Activated CD4-positive, alpha-beta memory T cell treated with anti-CD3 and anti-CD28 coated beads, Interleukin-2, amount 10 ng/mL, durations not matched to agents 7 days and 5 days (primary cell): ENCODE measurements at regions of chr22 and their contacts with region 1.

Region 1: GRCh38 chr22:37498289-37498909 is 12.2 kb upstream of the MFNG start:
- DNase-seq: peak; percentile 75
- H3K4me3 Mint-ChIP-seq: no peak overlapping the region
- H3K27ac Mint-ChIP-seq: no peak overlapping the region
- H3K4me1 Mint-ChIP-seq: peaks cover 12% of the 10 kb centered on the region
- H3K27me3 Mint-ChIP-seq: peaks cover 18% of the 10 kb centered on the region

Region 2: DNA sequence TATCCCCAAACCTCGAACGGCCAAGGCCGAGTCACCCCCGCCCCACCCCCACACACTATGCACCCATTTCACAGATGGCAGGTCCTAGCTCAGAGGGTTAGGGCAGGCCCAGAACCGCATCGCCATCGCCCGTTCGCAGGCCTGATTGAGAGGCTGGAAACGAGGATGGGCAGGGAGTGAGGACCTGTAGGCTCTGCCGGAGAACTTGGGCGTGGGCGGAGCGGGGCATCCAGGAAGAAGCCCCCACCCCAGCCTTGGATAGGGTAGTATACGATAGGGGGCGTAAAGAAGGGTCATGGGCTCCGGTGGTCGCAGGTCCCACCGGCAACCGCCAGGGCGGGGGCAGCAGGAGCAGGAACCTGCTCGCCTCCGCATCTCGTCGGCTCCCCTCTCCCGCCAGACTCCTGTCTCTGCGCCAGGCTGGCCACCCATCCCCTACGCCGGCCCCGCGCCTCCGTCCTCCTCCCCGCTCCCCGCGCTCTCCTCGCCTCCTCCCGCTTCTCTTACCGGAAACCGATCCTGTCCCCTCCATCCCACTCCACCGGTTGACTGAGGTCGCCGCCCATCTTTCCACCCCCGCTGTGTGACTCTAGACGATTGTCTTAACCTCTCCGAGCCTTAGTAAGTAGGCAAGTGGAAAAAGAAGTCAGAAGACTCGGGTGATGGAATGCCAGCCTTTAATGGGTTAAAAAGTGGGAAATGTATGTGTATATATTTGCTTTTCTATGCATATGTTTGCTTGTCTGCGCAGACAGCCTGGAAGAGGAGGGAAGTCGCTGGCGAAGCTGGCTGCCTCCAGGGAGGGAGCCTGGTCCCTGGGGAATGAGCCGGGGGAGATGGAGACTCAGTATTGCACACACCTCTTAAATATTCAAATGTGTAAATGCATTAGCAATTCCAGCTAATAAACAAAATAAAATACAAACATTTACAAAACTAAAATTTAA is 163.3 kb before region 1 on chr22:
- CTCF ChIA-PET with region 1: no interaction called
- POLR2A ChIA-PET with region 1: no interaction called
- DNase-seq: no peak
- H3K4me3 Mint-ChIP-seq: no peak overlapping the region
- H3K27ac Mint-ChIP-seq: no peak overlapping the region
- H3K4me1 Mint-ChIP-seq: peaks cover 9% of the 10 kb centered on the region
- H3K27me3 Mint-ChIP-seq: peaks cover 58% of the 10 kb centered on the region

Region 3: GRCh38 chr22:37486224-37486845 is 12.1 kb before region 1 on chr22 and contains the start of gene MFNG:
- CTCF ChIA-PET with region 1: interaction called, 16 read pairs
- POLR2A ChIA-PET with region 1: interaction called, 18 read pairs
- DNase-seq: peak; percentile 82
- H3K4me3 Mint-ChIP-seq: peak within 1 kb of the TSS; percentile 98
- H3K27ac Mint-ChIP-seq: peak within 1 kb of the TSS; percentile 94
- H3K4me1 Mint-ChIP-seq: peaks cover 56% of the 10 kb centered on the region
- H3K27me3 Mint-ChIP-seq: no peaks in the 10 kb centered on the region
- total RNA-seq, gene MFNG: 200 to 203 TPM

Region 4: GRCh38 chr22:37566903-37567820 is 68.8 kb after region 1 on chr22:
- CTCF ChIA-PET with region 1: no interaction called
- POLR2A ChIA-PET with region 1: no interaction called
- DNase-seq: peak; percentile 97
- H3K4me3 Mint-ChIP-seq: peak overlapping the region; percentile 54
- H3K27ac Mint-ChIP-seq: peak overlapping the region; percentile 79
- H3K4me1 Mint-ChIP-seq: peaks cover 27% of the 10 kb centered on the region
- H3K27me3 Mint-ChIP-seq: peaks cover 43% of the 10 kb centered on the region

Region 5: DNA sequence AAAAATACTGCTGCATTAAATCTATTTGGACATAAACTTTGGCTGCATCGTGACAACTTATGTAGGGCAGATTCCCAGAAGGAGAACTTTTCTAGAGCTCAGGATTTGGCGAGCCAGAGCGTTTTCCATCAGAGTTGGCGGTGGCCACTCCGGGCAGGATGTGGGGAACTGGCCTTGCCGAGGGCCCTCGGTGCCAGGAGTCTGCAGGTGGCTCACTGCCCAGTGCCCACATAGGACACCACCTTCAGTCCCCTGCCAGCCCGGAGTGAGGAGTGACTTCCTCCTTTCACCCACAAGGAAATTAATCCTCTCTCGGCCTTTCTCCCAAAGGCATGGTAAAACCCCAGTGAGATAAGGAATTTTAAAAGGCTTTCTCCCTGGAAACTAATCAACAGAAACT is 83.1 kb after region 1 on chr22:
- CTCF ChIA-PET with region 1: no interaction called
- POLR2A ChIA-PET with region 1: no interaction called
- DNase-seq: no peak
- H3K4me3 Mint-ChIP-seq: no peak overlapping the region
- H3K27ac Mint-ChIP-seq: no peak overlapping the region
- H3K4me1 Mint-ChIP-seq: peaks cover 7% of the 10 kb centered on the region
- H3K27me3 Mint-ChIP-seq: peaks cover 17% of the 10 kb centered on the region

Region 6: DNA sequence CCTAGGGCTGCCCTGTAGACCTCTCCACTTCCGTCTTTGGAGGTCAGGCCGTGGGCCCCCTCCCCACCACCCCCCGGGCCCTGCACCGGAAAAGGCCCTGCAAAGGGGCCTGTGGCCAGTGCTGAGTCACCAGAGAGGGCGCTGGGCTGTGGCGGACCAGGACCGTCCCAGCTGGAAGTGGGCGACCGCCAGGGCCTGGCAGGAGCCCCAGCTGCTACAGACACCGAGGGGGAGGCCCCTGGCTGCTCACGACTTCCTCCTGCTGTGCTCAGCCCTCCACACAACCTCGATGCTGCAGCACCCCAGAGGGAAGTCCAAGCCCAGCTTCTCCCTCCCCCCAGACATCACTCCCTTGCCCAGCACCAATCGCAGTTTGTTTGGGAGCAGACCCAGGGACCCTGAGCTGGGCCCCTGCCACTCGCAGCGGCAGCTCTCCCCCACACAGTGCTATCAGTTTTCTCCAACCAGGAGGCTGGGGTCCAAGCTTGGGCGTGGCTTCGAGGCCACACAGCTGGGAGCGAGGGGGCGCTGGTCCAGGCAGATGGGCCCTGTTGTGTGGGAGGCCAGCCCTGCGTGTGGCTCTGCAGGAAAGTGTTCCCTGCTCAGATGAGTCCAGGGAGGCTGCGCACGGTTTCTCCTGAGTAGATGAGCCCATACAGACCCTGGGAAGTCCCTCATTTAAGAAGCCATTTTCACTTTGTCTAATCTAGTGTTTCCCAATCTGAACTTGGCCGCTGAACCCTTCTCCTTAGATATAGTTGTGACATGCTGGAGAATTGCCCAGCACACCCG is 135.4 kb after region 1 on chr22:
- CTCF ChIA-PET with region 1: no interaction called
- POLR2A ChIA-PET with region 1: no interaction called
- DNase-seq: peak; percentile 74
- H3K4me3 Mint-ChIP-seq: peak overlapping the region; percentile 64
- H3K27ac Mint-ChIP-seq: peak overlapping the region; percentile 95
- H3K4me1 Mint-ChIP-seq: peaks cover 72% of the 10 kb centered on the region
- H3K27me3 Mint-ChIP-seq: no peaks in the 10 kb centered on the region